CD4-positive, alpha-beta memory T cell (primary cell): ENCODE measurements at regions of chr19 and their contacts with region 1.

Region 1: DNA sequence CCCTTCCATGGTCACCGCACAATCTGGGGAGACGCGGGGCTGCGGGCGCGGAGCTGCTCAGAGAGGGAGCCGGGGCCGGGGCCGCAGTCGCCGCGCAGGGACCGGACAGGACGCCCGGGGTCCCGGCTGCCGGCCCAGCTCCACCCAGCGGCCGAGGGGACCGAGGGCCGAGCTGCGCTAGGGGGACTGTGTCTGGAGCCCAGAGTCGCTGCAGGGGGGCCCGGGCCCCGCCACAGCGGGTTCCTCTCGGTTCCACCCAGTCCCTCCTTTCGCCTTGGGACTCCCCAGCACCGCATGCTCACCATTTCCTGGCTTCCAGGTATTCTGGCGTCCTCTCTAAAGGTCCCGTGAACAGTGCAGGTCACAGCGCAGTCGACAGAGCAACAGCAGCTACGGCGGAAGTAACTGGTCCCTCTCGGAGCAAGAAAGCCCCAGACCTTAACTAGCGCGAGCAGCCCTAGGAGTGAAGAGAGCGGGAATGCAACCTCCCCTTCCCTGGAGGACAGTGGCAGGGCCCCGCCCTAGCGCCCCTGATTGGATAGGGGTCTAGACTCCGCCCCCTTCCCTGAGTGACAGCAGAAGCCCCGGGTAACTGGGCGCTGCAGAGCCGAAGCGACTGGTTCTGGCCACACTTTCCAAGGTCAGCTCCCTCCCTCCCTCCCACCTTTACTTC is at the start of gene ZNF878:
- DNase-seq: peak in 3 of 5 donors; percentile 13 to 23 (median 15)
- H3K4me3 ChIP-seq: peak within 1 kb of the TSS; percentile 30 to 55
- H3K4me3 Mint-ChIP-seq: peak within 1 kb of the TSS; percentile 82 to 90 (median 87)
- H3K27ac ChIP-seq: no peak within 1 kb of the TSS
- H3K27ac Mint-ChIP-seq: peak within 1 kb of the TSS in 3 of 7 donors; percentile 9 to 88 (median 66)
- H3K4me1 ChIP-seq: peaks cover 13% of the 10 kb centered on the region
- H3K4me1 Mint-ChIP-seq: peaks cover 8 to 13% (median 11%) of the 10 kb centered on the region in 4 donors
- H3K27me3 ChIP-seq: no peaks in the 10 kb centered on the region
- H3K27me3 Mint-ChIP-seq: peaks cover 11 to 19% of the 10 kb centered on the region in 2 donors
- total RNA-seq, gene ZNF878: not detected

Region 2: DNA sequence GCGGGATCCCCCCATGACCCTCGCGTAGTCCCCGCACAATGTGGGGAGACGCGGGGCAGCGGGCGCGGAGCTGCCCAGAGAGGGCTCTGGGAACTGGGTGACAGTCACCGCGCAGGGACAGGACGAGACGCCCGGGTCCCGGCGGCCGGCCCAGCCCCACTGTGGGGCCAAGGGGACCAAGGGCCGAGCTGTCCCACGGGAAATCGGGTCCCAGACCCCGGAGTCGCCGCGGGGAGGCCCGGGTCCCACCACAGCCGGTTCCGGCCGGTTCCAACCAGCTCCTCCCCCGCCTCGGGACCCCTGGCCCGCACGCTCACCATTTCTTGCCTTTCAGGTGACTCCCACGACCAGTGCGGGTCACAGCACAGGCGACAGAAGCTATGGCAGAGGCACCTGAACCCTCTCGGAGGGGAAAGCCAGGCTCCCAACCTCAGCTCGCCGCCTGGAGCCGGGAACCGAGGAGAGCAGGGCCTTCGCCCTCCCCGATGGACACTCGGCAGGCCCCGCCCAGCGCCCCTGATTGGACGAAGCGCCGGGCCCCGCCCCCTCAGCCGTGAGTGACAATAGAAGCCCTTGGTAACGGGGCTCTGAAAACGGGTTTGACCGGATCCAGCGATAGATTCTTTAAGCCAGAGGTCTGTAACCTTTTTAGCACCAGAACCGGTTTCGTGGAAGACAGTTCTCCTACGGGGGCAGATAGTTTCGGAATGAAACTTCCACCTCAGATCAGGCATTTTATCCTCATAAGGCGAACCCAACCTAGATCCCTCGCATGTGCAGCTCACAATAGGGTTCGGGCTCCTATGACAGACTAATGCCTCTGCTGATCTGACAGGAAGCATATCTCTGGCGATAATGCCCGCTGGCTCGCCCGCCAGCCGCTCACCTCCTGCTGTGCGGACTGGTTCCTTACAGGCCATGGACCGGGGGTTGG is 17.1 kb before region 1 on chr19 and contains the start of gene ZNF433:
- CTCF ChIA-PET with region 1: no interaction called
- POLR2A ChIA-PET with region 1: no interaction called
- intact Hi-C with region 1: no loop called
- DNase-seq: peak; percentile 25 to 43 (median 34)
- H3K4me3 ChIP-seq: peak within 1 kb of the TSS; percentile 11 to 52
- H3K4me3 Mint-ChIP-seq: peak within 1 kb of the TSS; percentile 83 to 88 (median 86)
- H3K27ac ChIP-seq: no peak within 1 kb of the TSS
- H3K27ac Mint-ChIP-seq: peak within 1 kb of the TSS in 4 of 7 donors; percentile 17 to 80 (median 36)
- H3K4me1 ChIP-seq: no peaks in the 10 kb centered on the region
- H3K4me1 Mint-ChIP-seq: peaks cover 0 to 15% (median 4%) of the 10 kb centered on the region in 4 donors
- H3K27me3 ChIP-seq: no peaks in the 10 kb centered on the region
- H3K27me3 Mint-ChIP-seq: peaks cover 6 to 8% of the 10 kb centered on the region in 2 donors
- total RNA-seq, gene ZNF433: 0.38 to 0.44 TPM

Region 3: DNA sequence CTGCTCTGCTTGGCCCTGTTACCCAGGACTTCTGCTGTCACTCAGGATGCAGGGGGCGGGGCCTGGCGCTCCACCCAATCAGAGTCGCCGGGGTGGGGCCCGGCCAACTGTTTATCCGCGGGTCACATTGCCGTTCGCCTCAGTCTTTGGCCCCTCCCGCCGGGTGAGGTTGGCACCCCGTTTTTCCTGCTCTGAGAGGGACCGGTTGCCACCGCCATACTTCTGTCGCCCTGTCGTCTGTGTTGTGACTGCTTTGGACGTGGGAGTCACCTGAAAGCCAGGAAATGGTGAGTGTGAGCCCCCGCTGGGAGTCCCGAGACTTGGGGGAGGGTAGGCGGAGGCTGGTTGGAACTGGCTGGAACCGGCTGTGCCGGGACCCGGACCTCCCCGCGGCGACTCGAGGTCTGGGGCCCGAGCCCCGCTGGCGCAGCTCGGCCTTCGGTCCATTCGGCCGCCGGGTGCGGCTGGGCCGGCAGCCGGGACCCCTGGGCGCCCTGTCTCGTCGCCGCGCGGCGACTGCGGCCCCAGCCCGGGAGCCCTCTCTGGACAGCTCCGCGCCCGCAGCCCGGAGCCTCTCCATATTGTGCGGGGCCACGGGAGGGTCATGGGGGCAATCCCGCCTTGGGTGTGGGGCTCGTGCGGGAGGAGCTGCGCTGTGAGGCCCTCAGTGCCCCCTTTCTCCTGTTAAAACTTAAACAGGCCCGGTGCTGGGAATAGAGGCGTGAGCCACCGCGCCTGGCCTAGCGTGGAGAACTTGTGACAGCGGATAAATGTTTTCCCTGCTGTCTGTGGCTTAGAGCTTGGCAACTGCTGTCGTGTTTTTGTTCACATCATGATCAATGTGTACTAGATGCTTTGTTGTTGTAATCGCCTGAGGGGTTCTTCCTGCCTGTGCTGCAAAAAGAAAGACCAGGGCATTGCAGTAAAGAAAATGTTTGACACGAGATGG is 12.2 kb after region 1 on chr19 and contains the start of gene ZNF844:
- CTCF ChIA-PET with region 1: interaction called, 13 read pairs
- POLR2A ChIA-PET with region 1: no interaction called
- intact Hi-C with region 1: no loop called
- DNase-seq: peak; percentile 48 to 62 (median 56)
- H3K4me3 ChIP-seq: peak within 1 kb of the TSS; percentile 57 to 71
- H3K4me3 Mint-ChIP-seq: peak within 1 kb of the TSS; percentile 83 to 90 (median 86)
- H3K27ac ChIP-seq: peak within 1 kb of the TSS; percentile 11
- H3K27ac Mint-ChIP-seq: peak within 1 kb of the TSS in 6 of 7 donors; percentile 47 to 87 (median 74)
- H3K4me1 ChIP-seq: peaks cover 7% of the 10 kb centered on the region
- H3K4me1 Mint-ChIP-seq: peaks cover 3 to 13% (median 8%) of the 10 kb centered on the region in 4 donors
- H3K27me3 ChIP-seq: no peaks in the 10 kb centered on the region
- H3K27me3 Mint-ChIP-seq: no peaks in the 10 kb centered on the region
- total RNA-seq, gene ZNF844: 8.8 to 9.8 TPM